Activated CD8-positive, alpha-beta memory T cell treated with anti-CD3 and anti-CD28 coated beads, Interleukin-2, amount 10 ng/mL, durations not matched to agents 7 days and 5 days (primary cell): ENCODE measurements at regions of chr3 and their contacts with region 1.

Region 1: GRCh38 chr3:38346587-38347410 is at the start of gene XYLB:
- DNase-seq: peak; percentile 87
- ATAC-seq: peak; percentile 99
- H3K4me3 Mint-ChIP-seq: peak within 1 kb of the TSS; percentile 64
- H3K27ac Mint-ChIP-seq: peak within 1 kb of the TSS; percentile 58
- H3K4me1 Mint-ChIP-seq: peaks cover 14% of the 10 kb centered on the region
- H3K27me3 Mint-ChIP-seq: peaks cover 8% of the 10 kb centered on the region
- total RNA-seq, gene XYLB: 5.2 to 6.9 TPM

Region 2: DNA sequence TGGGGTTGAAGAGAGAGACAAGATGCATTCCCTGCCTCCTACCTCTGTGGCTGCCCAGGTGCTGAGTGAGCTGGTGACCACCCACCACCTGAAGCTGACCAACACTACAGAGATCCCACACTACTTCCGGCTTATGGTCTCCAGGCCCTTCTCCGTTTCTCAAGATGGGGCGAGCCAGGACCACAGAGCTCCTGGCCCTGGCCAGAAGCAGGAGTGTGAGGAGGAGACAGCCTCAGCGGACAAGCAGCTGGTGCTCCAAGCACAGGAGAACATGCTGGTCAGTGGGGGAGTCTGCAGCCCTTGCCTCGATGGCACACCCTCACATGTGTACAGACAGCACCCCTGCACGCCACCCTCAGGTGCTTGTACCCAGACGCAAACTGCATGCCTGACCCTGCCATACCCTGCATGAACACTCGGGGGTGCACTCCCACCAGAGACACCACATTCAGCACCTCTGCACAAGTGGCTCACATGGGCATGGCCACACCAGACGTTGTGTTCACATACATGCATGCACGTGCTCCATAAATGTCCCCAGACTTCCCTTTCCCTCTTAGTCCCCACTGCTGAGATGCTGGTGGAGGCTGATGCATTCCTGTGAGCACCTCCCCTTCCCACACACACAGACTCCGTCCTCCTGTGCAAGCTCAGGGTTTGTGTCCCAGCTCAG is 228.9 kb before region 1 on chr3:
- CTCF ChIA-PET with region 1: interaction called, 28 read pairs
- DNase-seq: peak; percentile 84
- ATAC-seq: peak; percentile 87
- H3K4me3 Mint-ChIP-seq: no peak overlapping the region
- H3K27ac Mint-ChIP-seq: no peak overlapping the region
- H3K4me1 Mint-ChIP-seq: peaks cover 4% of the 10 kb centered on the region
- H3K27me3 Mint-ChIP-seq: no peaks in the 10 kb centered on the region

Region 3: GRCh38 chr3:38317155-38317759 is 29.5 kb before region 1 on chr3:
- CTCF ChIA-PET with region 1: no interaction called
- DNase-seq: no peak
- ATAC-seq: no peak
- H3K4me3 Mint-ChIP-seq: no peak overlapping the region
- H3K27ac Mint-ChIP-seq: no peak overlapping the region
- H3K4me1 Mint-ChIP-seq: no peaks in the 10 kb centered on the region
- H3K27me3 Mint-ChIP-seq: peaks cover 5% of the 10 kb centered on the region

Region 4: DNA sequence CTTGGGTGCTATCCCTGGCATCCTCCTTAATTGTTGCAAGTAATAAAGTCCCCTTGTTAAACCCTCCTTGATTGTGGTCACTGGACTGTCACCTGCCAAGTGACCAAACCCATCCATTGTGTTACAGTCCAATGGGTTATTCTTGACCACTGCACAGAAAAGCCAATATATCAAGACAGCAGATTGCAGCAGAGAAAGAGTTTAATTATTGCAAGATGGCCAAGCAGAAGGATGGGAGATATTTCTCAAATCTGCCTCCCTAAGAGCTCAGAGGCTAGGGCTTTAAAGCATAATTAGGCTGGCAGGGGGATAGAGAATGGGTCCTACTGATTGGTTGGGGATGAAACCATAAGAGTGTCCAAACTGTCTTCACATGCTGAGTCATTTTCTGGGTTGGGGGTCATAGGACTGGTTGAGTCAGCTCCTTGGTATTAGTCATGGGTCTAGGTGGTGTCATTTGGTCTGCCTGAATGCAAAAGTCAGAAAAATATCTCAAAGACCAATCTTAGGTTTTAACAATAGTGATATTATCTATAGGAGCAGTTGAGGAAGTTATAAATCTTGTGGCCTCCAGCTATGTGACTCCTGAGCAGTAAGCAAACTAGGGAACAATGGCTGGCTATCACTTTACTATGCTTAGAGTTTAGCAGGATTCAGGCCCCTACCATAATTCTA is 19.3 kb before region 1 on chr3:
- CTCF ChIA-PET with region 1: interaction called, 11 read pairs
- DNase-seq: no peak
- ATAC-seq: peak; percentile 49
- H3K4me3 Mint-ChIP-seq: no peak overlapping the region
- H3K27ac Mint-ChIP-seq: no peak overlapping the region
- H3K4me1 Mint-ChIP-seq: peaks cover 4% of the 10 kb centered on the region
- H3K27me3 Mint-ChIP-seq: peaks cover 6% of the 10 kb centered on the region

Region 5: GRCh38 chr3:38454884-38455638 is 108.3 kb after region 1 on chr3:
- CTCF ChIA-PET with region 1: interaction called, 32 read pairs
- DNase-seq: peak; percentile 61
- ATAC-seq: peak; percentile 50
- H3K4me3 Mint-ChIP-seq: peak overlapping the region; percentile 90
- H3K27ac Mint-ChIP-seq: no peak overlapping the region
- H3K4me1 Mint-ChIP-seq: peaks cover 17% of the 10 kb centered on the region
- H3K27me3 Mint-ChIP-seq: peaks cover 7% of the 10 kb centered on the region

Region 6: GRCh38 chr3:38496131-38496910 is 149.5 kb after region 1 on chr3 and contains the start of gene EXOG:
- CTCF ChIA-PET with region 1: interaction called, 11 read pairs
- DNase-seq: peak; percentile 96
- ATAC-seq: peak; percentile 92
- H3K4me3 Mint-ChIP-seq: peak within 1 kb of the TSS; percentile 94
- H3K27ac Mint-ChIP-seq: peak within 1 kb of the TSS; percentile 93
- H3K4me1 Mint-ChIP-seq: peaks cover 23% of the 10 kb centered on the region
- H3K27me3 Mint-ChIP-seq: no peaks in the 10 kb centered on the region
- total RNA-seq, gene EXOG: 19.7 to 23.8 TPM

Region 7: DNA sequence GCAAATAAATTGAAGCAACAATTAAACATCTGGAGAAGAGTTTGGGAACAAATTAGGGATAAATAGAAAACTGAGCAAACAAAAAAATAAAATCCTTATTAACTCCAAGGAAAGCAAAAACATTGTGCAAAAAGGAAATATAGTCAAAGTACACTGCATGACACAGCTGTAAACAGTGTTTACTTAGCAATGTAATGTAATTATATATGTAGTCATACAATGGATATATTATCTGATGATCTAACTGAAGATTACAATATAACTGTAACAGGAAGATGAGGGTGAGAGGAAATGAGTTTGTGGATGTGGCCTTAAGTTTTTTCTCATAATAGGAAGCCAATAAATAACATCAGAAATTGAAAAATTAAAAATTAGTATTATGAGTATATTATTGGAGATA is 426.7 kb after region 1 on chr3:
- CTCF ChIA-PET with region 1: no interaction called
- DNase-seq: no peak
- ATAC-seq: no peak
- H3K4me3 Mint-ChIP-seq: no peak overlapping the region
- H3K27ac Mint-ChIP-seq: no peak overlapping the region
- H3K4me1 Mint-ChIP-seq: no peaks in the 10 kb centered on the region
- H3K27me3 Mint-ChIP-seq: peaks cover 7% of the 10 kb centered on the region